Gastrocnemius medialis (tissue), 4 donors: ENCODE measurements at regions of chr6 and their contacts with region 1.

Region 1: DNA sequence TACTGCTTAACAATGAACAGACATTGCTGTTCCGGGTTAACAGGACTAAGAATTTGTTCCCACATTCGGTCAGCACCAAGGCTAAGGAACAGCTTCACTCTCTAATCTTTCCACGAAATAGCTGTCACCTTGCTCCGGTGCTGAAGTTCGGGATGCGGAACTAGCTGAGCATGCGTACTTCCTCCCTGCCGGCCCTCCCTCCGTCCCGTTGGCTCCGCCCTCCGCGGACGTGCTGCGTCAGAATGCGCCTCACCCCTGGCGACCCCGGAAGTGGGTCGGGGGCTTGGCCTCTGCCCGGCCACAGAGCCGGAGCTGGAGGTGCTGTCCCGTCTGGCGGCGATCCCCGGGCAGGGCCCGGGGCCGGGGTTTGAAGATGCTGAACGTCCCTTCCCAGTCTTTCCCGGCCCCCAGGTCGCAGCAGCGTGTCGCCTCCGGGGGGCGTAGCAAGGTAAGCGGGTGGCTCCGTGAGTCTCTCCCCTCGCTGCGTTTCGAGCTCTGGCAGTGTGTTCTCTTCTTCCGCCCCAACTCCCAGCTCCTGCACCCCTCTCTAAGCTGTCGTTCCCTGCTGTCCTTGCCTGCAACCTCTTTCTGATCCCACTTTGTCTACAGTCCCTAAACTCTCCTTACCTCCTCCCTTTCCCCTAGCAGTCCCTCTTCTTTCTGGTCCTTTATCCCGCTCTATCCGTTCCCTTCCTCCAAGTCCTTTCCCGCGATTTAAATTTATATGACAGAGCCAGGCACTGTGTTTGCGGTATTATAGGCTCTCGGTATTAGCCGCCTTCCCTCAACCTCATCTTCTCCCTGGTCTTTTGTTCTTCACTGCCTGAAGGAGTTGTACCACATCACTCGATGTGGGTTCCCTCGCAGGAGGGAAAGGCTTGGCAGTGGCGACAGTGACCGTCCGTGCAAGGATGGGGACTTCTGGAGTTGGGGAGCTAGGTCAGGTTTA is at the start of gene CYB5R4:
- DNase-seq: peak; percentile 85 to 89
- ATAC-seq: peak; percentile 99
- H3K4me3 ChIP-seq: peak within 1 kb of the TSS; percentile 88 to 93 (median 90)
- H3K27ac ChIP-seq: peak within 1 kb of the TSS; percentile 84 to 91 (median 89)
- H3K4me1 ChIP-seq: peaks cover 16 to 20% of the 10 kb centered on the region in 2 donors
- H3K27me3 ChIP-seq: peaks cover 0 to 5% (median 2%) of the 10 kb centered on the region in 3 donors
- CTCF ChIP-seq: peak in 4 of 5 experiments; percentile 23 to 52 (median 36)
- POLR2A ChIP-seq: peak; percentile 68 to 82
- total RNA-seq, gene CYB5R4: 8.5 to 13.2 (median 10.2) TPM

Region 2: DNA sequence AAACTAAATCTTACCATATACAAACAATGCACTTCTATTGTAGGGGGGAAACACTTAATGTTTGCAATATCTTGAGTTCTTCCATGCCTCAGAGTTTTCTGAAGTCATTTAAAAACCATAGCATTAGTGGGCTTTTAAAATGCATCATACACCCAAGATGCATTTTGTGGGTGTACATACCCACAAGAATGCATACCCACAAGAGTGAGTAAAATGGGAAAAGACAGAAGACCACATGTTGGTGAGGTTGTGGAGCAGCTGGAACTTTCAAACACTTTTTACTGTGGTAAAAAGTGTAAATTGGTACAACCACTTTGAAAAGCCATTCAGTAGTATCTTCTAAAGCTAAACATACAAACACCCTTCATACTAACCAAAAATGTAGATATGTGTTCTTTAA is 57.3 kb after region 1 on chr6:
- in situ Hi-C with region 1: no loop called
- intact Hi-C with region 1: no loop called
- DNase-seq: no peak
- ATAC-seq: no peak
- H3K4me3 ChIP-seq: no peak overlapping the region
- H3K27ac ChIP-seq: no peak overlapping the region
- H3K4me1 ChIP-seq: no peaks in the 10 kb centered on the region
- H3K27me3 ChIP-seq: no peaks in the 10 kb centered on the region
- CTCF ChIP-seq: no peak
- POLR2A ChIP-seq: no peak

Region 3: DNA sequence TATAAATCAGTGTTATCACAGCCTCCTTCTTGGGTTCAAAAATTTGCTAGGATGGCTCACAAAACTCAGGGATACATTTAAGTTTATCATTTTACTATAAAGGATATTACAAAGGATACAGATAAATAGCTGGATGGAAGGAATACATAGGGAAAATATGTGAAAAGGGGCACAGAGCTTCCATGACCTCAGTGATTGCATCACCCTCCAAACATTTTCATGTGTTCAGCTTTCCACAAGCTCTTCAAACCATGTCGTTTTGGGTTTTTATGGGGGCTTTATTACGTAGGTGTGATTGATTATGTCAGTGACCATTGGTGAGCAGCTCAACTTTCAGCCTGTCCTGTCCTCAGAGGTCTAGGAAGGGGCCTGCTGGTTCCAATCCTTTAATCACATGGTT is 67.8 kb after region 1 on chr6:
- in situ Hi-C with region 1: no loop called
- intact Hi-C with region 1: no loop called
- DNase-seq: no peak
- ATAC-seq: no peak
- H3K4me3 ChIP-seq: no peak overlapping the region
- H3K27ac ChIP-seq: no peak overlapping the region
- H3K4me1 ChIP-seq: no peaks in the 10 kb centered on the region
- H3K27me3 ChIP-seq: no peaks in the 10 kb centered on the region
- CTCF ChIP-seq: no peak
- POLR2A ChIP-seq: no peak

Region 4: DNA sequence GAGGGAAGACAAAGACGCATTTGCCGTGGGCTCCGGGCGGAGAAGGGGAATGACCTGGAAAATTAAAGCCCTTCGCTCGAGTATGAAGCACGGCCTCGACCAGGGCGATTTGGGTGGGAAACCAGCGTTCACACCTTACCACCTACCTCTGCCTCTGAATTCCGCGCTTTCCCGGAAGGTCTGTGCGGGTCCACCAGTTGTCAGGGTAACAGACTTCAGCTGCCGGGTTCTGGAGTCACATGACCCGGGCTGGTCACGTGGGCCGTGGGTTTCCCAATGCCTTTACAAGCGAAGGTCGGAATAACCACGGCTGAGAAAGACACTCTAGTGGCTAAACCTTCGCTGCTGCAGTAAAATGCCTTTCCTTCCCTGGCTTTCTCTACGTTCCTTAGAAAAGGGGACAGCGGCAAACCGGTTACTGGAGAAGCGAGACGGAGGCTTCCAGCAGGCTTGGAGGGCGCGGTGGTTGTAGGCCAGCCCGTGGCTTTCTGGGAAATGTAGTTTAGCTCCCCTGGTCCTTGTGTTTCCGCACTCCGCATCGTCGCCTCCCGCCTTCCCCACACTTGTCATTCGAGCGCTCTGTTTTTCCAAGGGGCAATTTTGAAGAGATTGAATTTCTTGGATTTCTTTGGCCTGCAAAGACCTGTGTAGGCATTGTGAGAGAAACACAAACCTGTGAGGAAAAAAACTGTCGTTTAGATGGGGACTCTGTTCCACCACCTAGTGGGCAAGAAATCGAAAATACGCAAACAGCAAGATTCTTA is 367.9 kb after region 1 on chr6 and contains the start of gene CEP162:
- in situ Hi-C with region 1: no loop called
- intact Hi-C with region 1: loop called (anchors 1 kb)
- DNase-seq: peak; percentile 81 to 85
- ATAC-seq: peak; percentile 97 to 99
- H3K4me3 ChIP-seq: peak within 1 kb of the TSS; percentile 84 to 94 (median 90)
- H3K27ac ChIP-seq: peak within 1 kb of the TSS; percentile 81 to 95 (median 92)
- H3K4me1 ChIP-seq: peaks cover 0 to 12% of the 10 kb centered on the region in 2 donors
- H3K27me3 ChIP-seq: no peaks in the 10 kb centered on the region
- CTCF ChIP-seq: peak; percentile 41 to 74 (median 58)
- POLR2A ChIP-seq: no peak
- total RNA-seq, gene CEP162: 1.9 to 4.4 (median 3.2) TPM

Region 5: GRCh38 chr6:84411060-84411629 is 551.5 kb after region 1 on chr6:
- in situ Hi-C with region 1: no loop called
- intact Hi-C with region 1: no loop called
- DNase-seq: no peak
- ATAC-seq: no peak
- H3K4me3 ChIP-seq: no peak overlapping the region
- H3K27ac ChIP-seq: no peak overlapping the region
- H3K4me1 ChIP-seq: no peaks in the 10 kb centered on the region
- H3K27me3 ChIP-seq: no peaks in the 10 kb centered on the region
- CTCF ChIP-seq: no peak
- POLR2A ChIP-seq: no peak